Calu3 (cell line): ENCODE measurements at regions of chr11 and their contacts with region 1.

Region 1: DNA sequence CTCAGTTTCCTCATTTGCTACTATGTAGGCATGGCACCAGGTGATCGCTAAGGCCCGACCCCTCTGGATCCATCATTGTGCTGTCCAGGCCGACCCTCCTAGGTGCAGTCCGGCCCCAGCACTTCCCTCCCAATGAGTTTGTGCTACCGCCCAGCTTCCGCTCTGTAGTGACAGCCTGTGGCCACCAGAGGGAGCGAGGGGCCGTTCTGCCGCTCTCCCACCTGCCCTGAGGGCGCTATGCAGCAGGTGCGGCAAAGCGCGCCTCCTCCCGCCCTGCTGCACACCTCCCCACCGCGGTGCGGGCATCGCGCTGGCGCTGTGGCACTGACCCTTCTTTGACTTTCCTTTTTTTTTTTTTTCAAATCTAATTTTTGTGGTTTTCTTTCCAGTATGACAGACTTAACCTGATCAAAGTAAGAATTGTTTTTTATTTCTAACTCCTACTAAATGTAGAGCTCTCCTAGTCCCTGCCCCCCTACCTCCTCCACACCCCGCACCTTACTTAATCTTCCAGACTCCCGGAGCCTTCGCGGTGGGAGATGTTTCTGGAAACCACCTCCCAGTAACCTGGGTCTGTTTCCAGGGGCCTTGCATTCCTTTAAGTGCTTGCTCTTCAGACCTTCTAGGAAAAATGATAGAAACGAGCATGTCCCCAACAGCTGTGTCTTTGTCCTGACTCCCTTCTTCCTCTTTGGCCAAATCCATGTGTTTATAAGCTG is 73.7 kb downstream of the SCN3B start:
- DNase-seq: peak; percentile 79
- H3K4me3 Mint-ChIP-seq: no peak overlapping the region
- H3K27ac Mint-ChIP-seq: no peak overlapping the region
- H3K4me1 Mint-ChIP-seq: peaks cover 29% of the 10 kb centered on the region
- H3K27me3 Mint-ChIP-seq: peaks cover 54% of the 10 kb centered on the region
- CTCF ChIP-seq: peak; percentile 89

Region 2: DNA sequence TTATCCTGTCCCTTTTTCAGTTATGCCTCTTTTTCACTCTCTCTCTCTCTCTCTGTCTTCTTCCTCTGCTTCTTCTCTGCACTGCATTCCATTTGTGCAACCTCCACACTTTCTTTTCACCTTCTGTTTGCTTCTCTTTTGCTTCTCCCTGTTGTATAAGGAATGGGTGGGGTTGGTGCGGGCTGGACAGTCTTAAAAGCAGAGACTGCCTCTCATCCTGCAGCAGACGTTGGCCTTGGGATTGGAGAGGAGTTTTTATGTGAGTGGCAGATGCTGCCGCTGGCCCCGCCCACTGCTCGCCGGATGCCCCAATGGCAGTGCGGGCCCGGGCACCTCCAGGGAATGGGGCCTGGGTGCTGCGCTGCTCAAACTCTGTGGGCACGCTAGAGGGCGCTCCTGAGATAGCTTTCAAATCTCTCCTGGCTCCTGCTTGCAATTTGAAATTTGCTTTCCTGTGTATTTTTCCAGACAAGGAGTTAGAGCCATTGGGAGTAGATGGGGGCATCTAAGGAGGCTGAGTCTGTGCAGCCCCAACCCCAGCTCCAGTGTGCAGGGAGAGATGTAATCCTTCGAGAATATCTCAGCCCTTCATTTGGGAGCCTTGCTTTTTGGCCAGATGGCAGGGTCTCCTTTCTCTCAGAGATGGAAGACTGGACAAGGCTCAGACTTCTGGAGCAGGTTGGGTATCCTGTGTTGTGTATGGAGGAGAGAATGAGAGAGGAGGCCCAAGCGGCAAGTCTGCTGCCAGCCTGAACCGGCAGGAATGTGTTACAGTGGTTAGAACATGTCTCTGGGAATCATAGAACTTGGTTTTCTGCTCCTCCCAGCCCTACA is 69.5 kb before region 1 on chr11:
- CTCF ChIA-PET with region 1: no interaction called
- intact Hi-C with region 1: loop called (anchors 5 kb)
- DNase-seq: peak; percentile 81
- H3K4me3 Mint-ChIP-seq: no peak overlapping the region
- H3K27ac Mint-ChIP-seq: no peak overlapping the region
- H3K4me1 Mint-ChIP-seq: peaks cover 8% of the 10 kb centered on the region
- H3K27me3 Mint-ChIP-seq: peaks cover 85% of the 10 kb centered on the region
- CTCF ChIP-seq: peak; percentile 74

Region 3: DNA sequence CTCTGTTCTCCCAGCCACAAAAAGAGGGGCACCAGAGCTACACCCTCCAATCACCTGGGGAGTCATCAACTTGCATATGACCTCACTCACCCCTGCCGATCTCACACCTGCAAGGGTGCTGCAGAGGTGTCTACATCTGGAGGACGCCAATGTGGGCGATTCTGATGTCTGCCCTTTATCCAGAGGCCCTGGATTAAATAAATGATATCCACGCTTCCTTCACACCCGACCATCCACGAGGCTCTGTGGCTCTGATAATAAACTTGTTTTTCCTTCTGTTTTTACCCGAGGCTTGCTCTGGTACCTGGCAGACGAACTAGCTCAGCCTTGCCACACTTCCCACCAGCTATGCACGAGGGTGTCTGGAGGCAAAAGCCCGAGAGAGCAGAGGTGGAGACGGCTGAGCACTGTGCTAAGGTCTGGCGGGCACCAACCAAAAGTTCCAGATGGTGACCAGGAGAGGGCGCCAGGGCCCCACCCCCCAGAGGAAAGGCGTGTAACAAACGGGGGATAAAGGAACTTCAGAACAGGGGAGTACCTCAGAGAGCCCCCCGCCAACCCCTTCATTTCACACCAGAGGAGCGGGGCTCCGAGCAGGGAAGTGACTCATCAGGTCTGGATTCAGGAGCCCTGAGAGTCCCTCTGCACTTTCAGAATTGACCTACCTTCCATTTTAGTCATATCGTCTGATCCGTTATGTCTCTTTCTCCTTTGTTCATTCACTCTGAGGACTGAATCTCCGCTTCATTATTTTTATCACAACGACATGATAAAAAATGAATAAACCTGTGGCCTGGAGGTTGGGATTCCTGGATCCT is 60.2 kb after region 1 on chr11:
- CTCF ChIA-PET with region 1: interaction called, 3 read pairs
- intact Hi-C with region 1: loop called (anchors 10 kb)
- DNase-seq: peak; percentile 43
- H3K4me3 Mint-ChIP-seq: no peak overlapping the region
- H3K27ac Mint-ChIP-seq: no peak overlapping the region
- H3K4me1 Mint-ChIP-seq: no peaks in the 10 kb centered on the region
- H3K27me3 Mint-ChIP-seq: peaks cover 84% of the 10 kb centered on the region
- CTCF ChIP-seq: peak; percentile 65